Posterior cingulate gyrus (tissue), 11 donors: ENCODE measurements at regions of chr4 and their contacts with region 1.

Region 1: GRCh38 chr4:155025762-155026457 is 182.5 kb upstream of the NPY2R start:
- DNase-seq: peak in 1 of 10 donors; percentile 29

Region 2: DNA sequence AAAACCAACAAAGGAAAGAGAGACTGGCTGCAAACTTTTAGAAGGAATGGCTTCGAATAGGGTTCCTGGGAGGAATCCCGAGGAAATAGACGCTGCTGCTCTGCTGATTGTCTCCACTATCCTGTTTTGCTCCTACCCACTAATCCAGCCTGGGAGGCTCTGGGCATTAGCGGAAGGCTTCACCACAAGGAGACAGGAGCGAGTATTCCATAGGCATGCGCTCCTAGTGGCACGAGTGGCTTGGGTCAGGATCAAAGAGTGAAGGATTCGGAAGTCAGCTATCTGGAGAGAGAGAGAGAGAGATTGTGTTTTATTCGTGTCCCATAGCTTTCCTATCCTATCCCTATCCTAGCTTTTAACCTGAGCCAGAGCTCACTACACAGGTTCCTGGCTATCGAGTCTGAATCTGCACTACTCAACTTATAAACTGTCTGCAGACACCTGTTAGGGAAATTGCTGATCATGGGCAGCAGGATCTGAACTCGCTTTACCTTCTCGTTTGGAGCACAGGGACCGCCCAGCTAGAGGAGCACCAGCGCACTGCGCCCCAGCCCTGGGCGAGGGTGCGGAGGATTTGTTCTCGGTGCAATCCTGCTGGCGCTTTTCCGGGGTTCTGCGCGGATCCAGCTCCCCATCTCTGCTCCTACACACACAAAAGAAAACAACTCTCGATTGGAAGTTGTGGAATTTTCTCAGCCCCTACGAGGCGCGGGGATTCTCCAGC is 181.8 kb after region 1 on chr4:
- intact Hi-C with region 1: loop called (anchors 2 kb)
- DNase-seq: peak in 6 of 10 donors; percentile 12 to 84 (median 58)